Adrenal gland (tissue), 19 donors: ENCODE measurements at regions of chr1 and their contacts with region 1.

Region 1: DNA sequence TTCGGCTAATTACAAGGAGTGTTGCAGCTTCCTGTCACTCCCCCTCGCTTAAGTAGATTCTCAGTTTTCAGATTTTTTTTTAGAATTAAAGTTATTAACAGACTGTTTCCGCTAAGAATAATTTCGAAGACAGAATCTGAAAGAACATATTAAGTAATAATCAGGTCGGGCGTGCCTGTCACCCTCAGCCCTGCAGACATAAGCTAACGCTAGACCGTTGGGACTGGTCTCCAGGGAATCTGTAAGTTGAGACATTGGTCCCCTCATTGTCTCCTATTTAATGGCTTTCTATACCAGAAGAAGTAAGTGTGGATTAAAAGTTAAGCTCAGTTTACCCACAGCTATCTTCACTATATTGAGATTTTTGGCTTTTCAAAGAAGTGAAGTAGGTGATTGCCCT is 14.5 kb downstream of the NMNAT1 start:
- DNase-seq: no peak
- H3K4me3 ChIP-seq: no peak overlapping the region
- H3K27ac ChIP-seq: no peak overlapping the region
- H3K4me1 ChIP-seq: peaks cover 0 to 7% of the 10 kb centered on the region in 2 donors
- H3K27me3 ChIP-seq: no peaks in the 10 kb centered on the region
- CTCF ChIP-seq: no peak
- POLR2A ChIP-seq: no peak

Region 2: DNA sequence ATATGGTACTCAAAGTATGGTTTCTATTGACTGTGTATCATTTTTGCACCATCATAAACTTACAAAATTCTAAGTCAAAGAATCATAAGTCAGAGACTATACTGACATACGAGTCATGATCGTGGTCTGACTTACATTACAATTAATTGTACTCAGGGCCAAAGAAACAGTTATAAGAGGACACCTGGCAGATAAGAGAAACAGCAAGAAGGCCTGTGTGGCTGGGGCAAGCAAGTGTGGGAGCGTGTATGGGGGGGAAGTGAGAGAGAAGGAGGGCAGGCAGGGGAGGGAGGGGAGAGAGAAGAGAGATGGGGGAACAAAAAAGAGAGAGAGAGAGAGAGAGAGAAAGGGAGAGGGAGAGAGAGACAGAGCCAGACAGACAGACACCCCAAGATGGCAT is 1211.2 kb before region 1 on chr1:
- intact Hi-C with region 1: no loop called
- DNase-seq: no peak
- H3K4me3 ChIP-seq: no peak overlapping the region
- H3K27ac ChIP-seq: peak overlapping the region in 1 of 5 donors; percentile 10
- H3K4me1 ChIP-seq: peaks cover 10 to 15% of the 10 kb centered on the region in 2 donors
- H3K27me3 ChIP-seq: no peaks in the 10 kb centered on the region
- CTCF ChIP-seq: no peak
- POLR2A ChIP-seq: no peak

Region 3: GRCh38 chr1:9809100-9809510 is 148.6 kb before region 1 on chr1:
- intact Hi-C with region 1: no loop called
- DNase-seq: peak in 1 of 7 donors; percentile 33
- H3K4me3 ChIP-seq: no peak overlapping the region
- H3K27ac ChIP-seq: no peak overlapping the region
- H3K4me1 ChIP-seq: peaks cover 17 to 31% of the 10 kb centered on the region in 2 donors
- H3K27me3 ChIP-seq: no peaks in the 10 kb centered on the region
- CTCF ChIP-seq: no peak
- POLR2A ChIP-seq: no peak

Region 4: GRCh38 chr1:9910425-9911178 is 47.1 kb before region 1 on chr1:
- intact Hi-C with region 1: no loop called
- DNase-seq: peak; percentile 99 to 100 (median 100)
- H3K4me3 ChIP-seq: peak overlapping the region in 3 of 4 donors; percentile 27 to 57 (median 33)
- H3K27ac ChIP-seq: peak overlapping the region; percentile 83 to 95 (median 91)
- H3K4me1 ChIP-seq: peaks cover 9 to 17% of the 10 kb centered on the region in 2 donors
- H3K27me3 ChIP-seq: no peaks in the 10 kb centered on the region
- CTCF ChIP-seq: peak in 1 of 6 experiments; percentile 17
- POLR2A ChIP-seq: peak; percentile 80 to 94

Region 5: DNA sequence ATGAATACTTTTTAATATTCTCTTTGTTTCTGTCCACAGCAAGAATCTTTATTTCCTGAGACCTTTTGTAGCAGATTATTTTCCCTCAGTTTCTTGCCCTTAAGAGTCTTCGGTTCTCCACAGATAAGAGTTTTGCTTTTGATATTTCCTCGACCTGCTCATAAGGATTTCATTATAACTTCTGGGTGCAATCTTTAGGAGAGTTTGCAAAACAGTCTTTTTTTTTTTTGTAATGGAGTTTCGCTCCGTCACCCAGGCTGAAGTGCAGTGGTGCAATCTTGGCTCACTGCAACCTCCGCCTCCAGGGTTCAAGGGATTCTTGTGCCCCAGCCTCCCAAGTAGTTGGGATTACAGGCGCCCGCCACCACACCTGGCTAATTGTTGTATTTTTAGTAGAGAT is 64.9 kb after region 1 on chr1:
- intact Hi-C with region 1: loop called in 1 of 2 experiments (anchors 5 kb)
- DNase-seq: no peak
- H3K4me3 ChIP-seq: no peak overlapping the region
- H3K27ac ChIP-seq: no peak overlapping the region
- H3K4me1 ChIP-seq: no peaks in the 10 kb centered on the region
- H3K27me3 ChIP-seq: no peaks in the 10 kb centered on the region
- CTCF ChIP-seq: no peak
- POLR2A ChIP-seq: no peak

Region 6: GRCh38 chr1:10032590-10033358 is 75.0 kb after region 1 on chr1 and contains the start of gene UBE4B:
- intact Hi-C with region 1: loop called in 1 of 2 experiments (anchors 5 kb)
- DNase-seq: peak; percentile 97 to 99 (median 98)
- H3K4me3 ChIP-seq: peak within 1 kb of the TSS; percentile 92 to 98 (median 93)
- H3K27ac ChIP-seq: peak within 1 kb of the TSS; percentile 87 to 97 (median 91)
- H3K4me1 ChIP-seq: peaks cover 9 to 29% of the 10 kb centered on the region in 2 donors
- H3K27me3 ChIP-seq: no peaks in the 10 kb centered on the region
- CTCF ChIP-seq: peak; percentile 44 to 94 (median 81)
- POLR2A ChIP-seq: no peak
- total RNA-seq, gene UBE4B: 34.5 to 87.1 (median 61.7) TPM

Region 7: DNA sequence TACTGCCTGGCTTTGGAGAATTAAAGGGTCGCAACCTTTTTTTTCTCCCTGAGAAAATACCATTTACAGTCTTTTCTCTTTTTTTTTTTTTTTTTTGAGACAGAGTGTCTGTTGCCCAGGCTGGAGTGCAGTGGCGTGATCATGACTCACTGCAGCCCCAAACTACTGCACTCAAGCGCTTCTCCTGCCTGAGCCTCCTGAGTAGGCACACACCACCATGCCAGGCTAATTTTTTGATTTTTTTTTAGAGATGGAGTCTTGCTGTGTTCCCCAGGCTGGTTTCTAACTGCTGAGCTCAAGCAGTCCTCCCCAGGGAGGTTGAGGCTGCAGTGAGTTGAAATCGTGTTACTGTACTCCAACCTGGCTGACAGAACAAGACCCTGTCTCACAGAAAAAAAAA is 99.6 kb after region 1 on chr1:
- intact Hi-C with region 1: no loop called
- DNase-seq: peak; percentile 47 to 84 (median 72)
- H3K4me3 ChIP-seq: no peak overlapping the region
- H3K27ac ChIP-seq: peak overlapping the region in 2 of 5 donors; percentile 43 to 50
- H3K4me1 ChIP-seq: peaks cover 11 to 40% of the 10 kb centered on the region in 2 donors
- H3K27me3 ChIP-seq: no peaks in the 10 kb centered on the region
- CTCF ChIP-seq: no peak
- POLR2A ChIP-seq: peak in 1 of 2 donors; percentile 24